Left cardiac atrium (tissue), 4 donors: ENCODE measurements at regions of chr7 and their contacts with region 1.

Region 1: GRCh38 chr7:63008366-63008765 is 990.3 kb upstream of the ZNF722 start:
- DNase-seq: no peak
- ATAC-seq: no peak

Region 2: DNA sequence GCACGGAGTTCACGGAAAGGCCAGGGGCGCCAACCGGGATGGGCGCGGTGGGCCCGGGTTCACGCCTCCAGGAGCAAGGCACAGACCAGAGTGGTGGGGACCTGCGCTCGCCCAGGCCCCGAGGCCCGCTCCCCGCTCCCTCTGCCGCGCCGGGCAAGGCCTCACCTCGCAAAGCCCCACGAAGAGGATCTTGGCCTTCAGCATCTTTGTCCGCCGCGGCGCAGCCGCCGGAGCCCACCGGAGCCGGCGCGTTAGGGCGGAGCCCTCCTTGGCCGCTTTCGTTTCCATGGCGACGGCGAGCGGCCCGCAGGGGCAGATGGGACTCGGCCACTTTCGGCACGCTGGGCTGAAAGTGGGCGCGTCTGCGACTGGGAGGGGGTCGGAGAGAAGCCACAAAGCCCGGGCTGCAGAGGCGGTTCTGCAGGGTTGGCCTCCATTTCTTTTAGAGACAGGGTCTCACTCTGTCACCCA is 45.9 kb after region 1 on chr7:
- intact Hi-C with region 1: no loop called
- DNase-seq: no peak
- ATAC-seq: no peak

Region 3: DNA sequence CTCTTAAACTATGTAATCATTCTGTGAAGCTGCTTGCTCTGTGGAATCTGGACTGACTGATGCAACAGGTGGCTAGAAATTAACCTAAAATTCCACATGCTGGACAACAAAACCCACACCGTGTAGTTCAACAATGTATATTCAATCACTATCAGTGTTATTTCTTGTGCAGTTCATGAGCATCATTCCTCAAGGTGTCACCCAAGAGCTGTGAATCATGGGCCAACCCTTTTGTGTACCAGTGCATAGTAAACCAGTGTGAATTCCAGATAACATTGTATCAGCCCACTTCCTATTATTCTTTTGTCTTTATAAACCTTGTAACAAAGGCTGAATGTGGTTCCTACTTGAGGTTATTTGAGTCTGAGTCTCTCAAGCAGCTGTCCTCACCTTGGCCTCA is 85.1 kb after region 1 on chr7:
- intact Hi-C with region 1: no loop called
- DNase-seq: no peak
- ATAC-seq: no peak

Region 4: DNA sequence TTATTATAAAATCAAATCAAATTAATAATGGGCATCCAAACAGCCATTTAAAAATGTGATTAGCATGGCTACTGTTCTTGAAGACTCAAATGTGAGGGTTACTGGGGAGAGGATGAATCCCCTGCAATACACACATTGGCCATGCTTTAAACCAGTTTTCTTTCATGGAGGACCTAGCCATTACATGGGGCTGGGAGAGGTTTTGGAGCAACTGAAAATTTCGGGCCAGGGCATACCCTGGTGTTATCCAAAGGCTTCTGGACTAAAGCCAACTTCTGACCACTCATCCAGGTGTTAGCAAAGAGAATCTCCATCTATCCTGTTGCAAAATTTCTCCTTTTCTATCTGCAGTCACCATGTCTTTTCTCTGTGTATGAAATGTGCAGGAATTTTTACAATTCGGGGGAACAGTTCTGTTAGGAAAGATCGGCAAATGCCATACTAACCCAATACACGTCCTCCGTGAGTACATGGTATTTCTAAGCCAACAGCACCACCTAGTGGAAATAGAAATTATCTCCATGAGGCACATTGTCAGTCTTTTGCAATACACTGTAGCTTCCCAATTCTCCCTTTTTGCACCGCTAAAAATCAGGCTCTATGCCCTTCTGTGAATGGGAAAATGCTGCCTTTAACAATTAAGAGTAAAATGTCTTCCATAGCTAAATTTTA is 1610.6 kb after region 1 on chr7:
- intact Hi-C with region 1: loop called (anchors 5 to 10 kb)
- DNase-seq: no peak
- ATAC-seq: peak; percentile 73 to 81

Region 5: DNA sequence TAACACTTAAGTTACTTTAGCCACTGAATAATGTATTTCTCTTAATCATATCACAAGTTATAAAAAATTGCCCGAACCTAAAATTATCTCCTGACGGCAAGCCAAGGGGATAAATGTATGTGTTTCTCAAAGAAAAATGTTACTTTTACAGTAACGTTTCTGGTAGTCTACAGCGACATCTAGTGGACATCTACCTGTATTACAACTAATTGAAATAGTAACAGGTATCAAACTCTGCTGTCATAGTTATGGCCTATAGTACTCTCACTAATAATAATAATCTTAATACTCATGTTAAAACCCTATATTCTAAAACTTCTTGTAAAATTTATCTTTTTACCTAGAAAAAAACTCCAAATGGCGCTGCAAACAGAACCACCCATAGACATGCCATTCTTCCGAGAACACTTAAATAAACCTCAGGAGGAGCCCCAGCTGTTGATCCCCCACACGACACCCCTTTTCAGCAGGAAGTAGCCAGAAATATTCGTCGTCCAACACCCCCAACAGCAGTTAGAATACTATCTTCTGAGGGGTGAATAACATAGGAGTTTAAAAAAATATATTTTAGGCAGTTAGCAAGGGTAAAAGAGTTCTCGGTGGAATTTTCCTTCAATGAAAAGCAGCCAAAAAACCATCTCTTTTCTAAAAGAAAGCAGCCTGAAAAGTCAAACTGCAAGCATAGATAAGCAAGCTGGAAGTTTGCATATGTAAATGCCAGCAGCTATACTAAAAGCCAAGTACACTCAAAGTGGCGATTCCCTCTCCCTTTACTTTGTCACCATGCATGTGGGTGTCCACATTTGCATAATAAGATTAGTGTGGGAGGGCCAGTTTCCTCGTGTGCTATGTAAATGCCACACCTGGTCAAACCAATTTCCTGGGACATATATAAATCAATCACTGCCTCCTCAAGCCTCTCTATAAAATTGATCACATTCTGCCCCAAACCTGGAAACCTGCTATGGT is 1617.0 kb after region 1 on chr7:
- intact Hi-C with region 1: loop called in 1 of 2 experiments (anchors 10 kb)
- DNase-seq: no peak
- ATAC-seq: no peak